OCI-LY7 (cell line): ENCODE measurements at regions of chr4 and their contacts with region 1.

Region 1: GRCh38 chr4:185471235-185472102 is at the start of gene CCDC110:
- DNase-seq: peak; percentile 94
- H3K4me3 ChIP-seq: peak within 1 kb of the TSS; percentile 92
- H3K27ac ChIP-seq: peak within 1 kb of the TSS; percentile 81
- H3K4me1 ChIP-seq: peaks cover 44% of the 10 kb centered on the region
- CTCF ChIP-seq: peak; percentile 65
- total RNA-seq, gene CCDC110: 1.2 and 1.7 TPM in 2 replicates

Region 2: GRCh38 chr4:184782731-184783373 is 688.6 kb before region 1 on chr4:
- CTCF ChIA-PET with region 1: no interaction called
- POLR2A ChIA-PET with region 1: no interaction called
- intact Hi-C with region 1: no loop called
- DNase-seq: no peak
- H3K4me3 ChIP-seq: no peak overlapping the region
- H3K27ac ChIP-seq: no peak overlapping the region
- H3K4me1 ChIP-seq: no peaks in the 10 kb centered on the region
- CTCF ChIP-seq: no peak

Region 3: DNA sequence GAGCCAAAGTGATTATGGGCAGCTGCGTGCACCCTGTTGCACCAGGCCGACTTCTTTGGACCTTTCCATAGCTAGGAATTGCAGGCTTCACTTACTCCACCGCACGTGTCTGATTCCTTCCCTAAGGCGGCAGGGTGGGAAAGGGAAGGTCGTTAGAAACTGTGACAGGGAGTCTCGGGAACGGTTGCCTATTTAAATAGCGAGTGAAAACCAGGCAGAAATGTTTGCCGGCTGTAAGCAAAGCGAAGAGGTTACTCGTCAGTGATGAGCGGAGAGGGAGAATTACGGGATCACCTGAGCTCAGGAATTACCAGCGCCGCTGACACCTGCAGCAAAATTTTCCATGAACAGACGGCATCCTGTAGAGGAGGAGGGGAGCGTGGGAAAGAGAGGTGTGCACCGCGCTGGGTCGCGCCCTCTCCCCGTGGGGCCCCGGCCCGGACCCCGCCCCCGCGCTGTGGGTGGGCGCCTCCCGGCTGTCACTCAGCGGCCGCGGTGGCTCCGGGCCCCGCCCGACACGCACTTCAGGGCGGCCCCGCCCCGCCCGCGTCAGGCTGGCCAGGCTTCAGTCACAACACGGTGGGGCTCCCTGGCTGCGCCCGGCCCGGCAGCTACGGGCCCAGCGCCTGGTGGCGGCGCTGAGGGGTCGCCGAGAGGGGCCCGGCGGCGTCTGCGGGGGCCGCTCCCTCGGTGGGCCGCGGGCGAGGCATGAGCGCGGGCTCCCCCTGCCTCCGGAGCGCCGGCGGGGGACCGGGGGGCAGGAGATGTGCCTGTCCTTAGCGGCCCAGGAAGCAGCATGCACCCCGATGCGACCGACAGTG is 262.2 kb before region 1 on chr4 and contains the start of gene SNX25:
- CTCF ChIA-PET with region 1: no interaction called
- POLR2A ChIA-PET with region 1: no interaction called
- intact Hi-C with region 1: loop called (anchors 1 kb)
- DNase-seq: peak; percentile 91
- H3K4me3 ChIP-seq: peak within 1 kb of the TSS; percentile 81
- H3K27ac ChIP-seq: peak within 1 kb of the TSS; percentile 80
- H3K4me1 ChIP-seq: peaks cover 57% of the 10 kb centered on the region
- CTCF ChIP-seq: peak; percentile 33
- total RNA-seq, gene SNX25: 33.7 and 35.5 TPM in 2 replicates

Region 4: DNA sequence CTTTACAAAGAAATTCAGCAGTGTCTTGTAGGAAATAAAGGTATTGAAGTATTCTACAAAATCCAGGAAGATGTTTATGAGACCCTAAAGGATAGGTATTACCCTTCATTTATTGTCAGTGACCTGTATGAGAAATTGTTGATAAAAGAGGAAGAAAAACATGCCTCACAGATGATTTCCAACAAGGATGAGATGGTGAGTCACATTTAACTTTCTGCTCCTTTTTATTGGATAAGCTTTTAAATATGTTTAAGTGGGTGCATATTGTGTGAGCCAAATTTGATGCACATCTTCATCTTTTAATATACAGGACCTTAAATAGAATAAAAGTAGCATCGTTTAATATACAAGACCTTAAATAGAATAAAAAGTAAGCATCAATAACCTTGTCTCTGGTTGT is 147.9 kb before region 1 on chr4:
- CTCF ChIA-PET with region 1: no interaction called
- POLR2A ChIA-PET with region 1: no interaction called
- intact Hi-C with region 1: no loop called
- DNase-seq: no peak
- H3K4me3 ChIP-seq: no peak overlapping the region
- H3K27ac ChIP-seq: no peak overlapping the region
- H3K4me1 ChIP-seq: peaks cover 2% of the 10 kb centered on the region
- CTCF ChIP-seq: no peak

Region 5: GRCh38 chr4:185395956-185396723 is 75.3 kb before region 1 on chr4:
- CTCF ChIA-PET with region 1: interaction called, 3 read pairs
- POLR2A ChIA-PET with region 1: interaction called, 3 read pairs
- intact Hi-C with region 1: loop called (anchors 2 kb)
- DNase-seq: peak; percentile 97
- H3K4me3 ChIP-seq: peak overlapping the region; percentile 75
- H3K27ac ChIP-seq: peak overlapping the region; percentile 70
- H3K4me1 ChIP-seq: peaks cover 58% of the 10 kb centered on the region
- CTCF ChIP-seq: no peak

Region 6: GRCh38 chr4:185457136-185457535 is 14.3 kb before region 1 on chr4:
- CTCF ChIA-PET with region 1: no interaction called
- POLR2A ChIA-PET with region 1: interaction called, 10 read pairs
- intact Hi-C with region 1: no loop called
- DNase-seq: no peak
- H3K4me3 ChIP-seq: no peak overlapping the region
- H3K27ac ChIP-seq: no peak overlapping the region
- H3K4me1 ChIP-seq: no peaks in the 10 kb centered on the region
- CTCF ChIP-seq: no peak

Region 7: GRCh38 chr4:185597532-185598188 is 126.2 kb after region 1 on chr4:
- CTCF ChIA-PET with region 1: no interaction called
- POLR2A ChIA-PET with region 1: interaction called, 6 read pairs
- intact Hi-C with region 1: loop called (anchors 1 kb)
- DNase-seq: peak; percentile 78
- H3K4me3 ChIP-seq: no peak overlapping the region
- H3K27ac ChIP-seq: no peak overlapping the region
- H3K4me1 ChIP-seq: peaks cover 13% of the 10 kb centered on the region
- CTCF ChIP-seq: peak; percentile 100

Region 8: GRCh38 chr4:186021461-186022167 is 550.1 kb after region 1 on chr4:
- CTCF ChIA-PET with region 1: no interaction called
- POLR2A ChIA-PET with region 1: no interaction called
- intact Hi-C with region 1: loop called (anchors 5 kb)
- DNase-seq: peak; percentile 44
- H3K4me3 ChIP-seq: no peak overlapping the region
- H3K27ac ChIP-seq: no peak overlapping the region
- H3K4me1 ChIP-seq: no peaks in the 10 kb centered on the region
- CTCF ChIP-seq: peak; percentile 81

Region 9: DNA sequence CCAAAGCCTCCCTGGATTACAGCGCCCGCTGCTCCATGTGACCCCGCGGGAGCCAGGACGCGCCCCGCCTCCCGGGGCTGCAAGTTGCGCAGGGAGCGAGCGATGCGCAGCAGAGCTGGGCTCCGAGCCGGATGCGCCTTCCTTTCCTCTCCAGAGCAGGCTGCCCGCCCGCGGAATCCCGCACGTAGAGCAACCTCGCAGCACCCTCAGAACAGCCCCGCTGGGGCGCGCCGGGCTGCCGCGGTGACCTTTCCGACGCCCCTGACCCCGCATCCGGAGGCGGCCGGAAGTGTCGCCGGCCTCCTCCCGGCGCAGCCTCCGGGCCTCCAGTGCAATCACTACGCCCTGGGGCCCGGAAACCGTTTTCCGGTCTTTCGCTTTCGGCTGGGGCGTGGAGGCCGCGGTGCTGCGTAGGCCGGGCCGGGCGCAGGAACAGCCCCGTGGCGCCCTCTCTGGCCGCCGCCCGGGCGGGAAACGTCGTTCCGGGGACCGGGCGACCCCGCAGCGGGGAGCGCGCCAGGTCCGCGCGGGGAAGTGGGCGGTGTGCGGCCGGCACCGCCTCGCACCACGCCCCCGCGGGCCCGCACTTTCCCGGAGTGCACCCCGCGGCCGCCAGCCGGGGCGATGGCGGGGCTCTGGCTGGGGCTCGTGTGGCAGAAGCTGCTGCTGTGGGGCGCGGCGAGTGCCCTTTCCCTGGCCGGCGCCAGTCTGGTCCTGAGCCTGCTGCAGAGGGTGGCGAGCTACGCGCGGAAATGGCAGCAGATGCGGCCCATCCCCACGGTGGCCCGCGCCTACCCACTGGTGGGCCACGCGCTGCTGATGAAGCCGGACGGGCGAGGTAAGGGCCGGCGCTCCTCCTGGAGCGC is 720.0 kb after region 1 on chr4 and contains the start of gene CYP4V2:
- CTCF ChIA-PET with region 1: no interaction called
- POLR2A ChIA-PET with region 1: no interaction called
- intact Hi-C with region 1: loop called (anchors 5 kb)
- DNase-seq: peak; percentile 92
- H3K4me3 ChIP-seq: peak within 1 kb of the TSS; percentile 82
- H3K27ac ChIP-seq: peak within 1 kb of the TSS; percentile 91
- H3K4me1 ChIP-seq: peaks cover 27% of the 10 kb centered on the region
- CTCF ChIP-seq: peak; percentile 61
- total RNA-seq, gene CYP4V2: 6.2 and 6.9 TPM in 2 replicates